OCI-LY7 (cell line): ENCODE measurements at regions of chr3 and their contacts with region 1.

Region 1: DNA sequence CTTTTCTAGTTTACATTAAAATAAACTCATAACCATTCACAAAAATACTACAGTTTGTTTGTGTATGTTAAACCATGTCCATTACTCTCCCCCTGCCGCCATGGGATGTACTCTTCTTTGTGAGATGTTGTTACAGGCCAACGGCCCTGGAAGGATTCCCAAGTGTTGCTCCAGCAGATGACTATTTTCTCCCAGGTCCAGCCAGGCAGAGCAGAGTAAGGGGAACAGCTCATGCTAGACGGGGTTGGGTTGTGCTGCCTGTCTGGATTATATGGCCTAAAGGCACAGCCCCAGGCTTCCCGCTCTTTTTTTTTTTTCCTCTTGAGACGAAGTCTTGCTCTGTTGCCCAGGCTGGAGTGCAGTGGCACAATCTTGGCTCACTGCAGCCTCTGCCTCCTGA is 24.5 kb upstream of the SLCO2A1 start:
- DNase-seq: no peak
- H3K4me3 ChIP-seq: no peak overlapping the region
- H3K27ac ChIP-seq: no peak overlapping the region
- H3K4me1 ChIP-seq: no peaks in the 10 kb centered on the region
- CTCF ChIP-seq: no peak

Region 2: GRCh38 chr3:134126153-134126552 is 71.9 kb after region 1 on chr3:
- CTCF ChIA-PET with region 1: no interaction called
- POLR2A ChIA-PET with region 1: no interaction called
- intact Hi-C with region 1: loop called (anchors 2 kb)
- DNase-seq: no peak
- H3K4me3 ChIP-seq: no peak overlapping the region
- H3K27ac ChIP-seq: no peak overlapping the region
- H3K4me1 ChIP-seq: no peaks in the 10 kb centered on the region
- CTCF ChIP-seq: peak; percentile 39; the same call in 1 of the 2 replicates

Region 3: DNA sequence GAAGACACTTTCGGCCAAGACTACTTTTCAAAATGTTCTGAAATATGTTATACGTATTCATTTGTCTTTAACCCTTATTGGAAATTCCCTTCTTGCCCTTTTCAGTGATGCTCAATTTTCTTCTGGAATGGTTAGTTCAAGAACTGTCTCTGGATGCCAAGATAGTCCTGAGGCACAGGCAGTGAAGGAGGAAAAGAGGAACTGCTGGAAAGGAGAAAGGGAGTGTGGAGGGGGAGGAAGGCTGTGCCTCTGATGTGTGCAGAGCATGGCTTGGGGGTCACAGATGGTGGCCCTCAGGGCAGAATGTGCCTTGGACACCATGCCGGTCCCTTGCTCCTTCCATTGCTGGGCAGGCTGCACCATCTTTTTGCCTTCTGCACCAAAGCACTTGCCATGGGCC is 505.4 kb after region 1 on chr3:
- CTCF ChIA-PET with region 1: no interaction called
- POLR2A ChIA-PET with region 1: no interaction called
- intact Hi-C with region 1: no loop called
- DNase-seq: no peak
- H3K4me3 ChIP-seq: no peak overlapping the region
- H3K27ac ChIP-seq: no peak overlapping the region
- H3K4me1 ChIP-seq: no peaks in the 10 kb centered on the region
- CTCF ChIP-seq: no peak